SK-N-SH (cell line): ENCODE measurements at regions of chr20 and their contacts with region 1.

Region 1: DNA sequence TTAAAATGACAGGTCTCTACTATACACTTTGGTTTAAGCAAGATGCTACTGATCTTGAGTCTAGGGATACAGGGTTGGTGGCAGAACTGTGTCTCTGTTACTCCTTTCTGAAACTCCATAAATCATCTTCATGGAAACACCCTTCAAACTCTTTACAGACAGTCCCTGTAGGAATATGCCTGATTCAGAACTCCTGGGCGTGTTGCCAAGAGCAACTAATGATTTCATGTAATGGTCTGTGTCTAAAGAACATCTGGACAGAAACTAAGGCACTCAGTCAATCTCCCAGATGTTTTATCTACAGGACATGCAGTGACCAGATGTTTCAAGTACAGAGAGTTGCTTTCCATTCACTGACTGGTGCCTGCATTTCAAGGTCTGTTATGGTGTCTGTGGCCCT is 464.4 kb upstream of the CHD6 start:
- DNase-seq: peak; percentile 81
- H3K4me3 ChIP-seq: no peak overlapping the region
- H3K27ac ChIP-seq: peak overlapping the region in 1 of 2 experiments; percentile 97; a peak in 2 of 4 replicates
- H3K4me1 ChIP-seq: peaks cover 0 to 32% of the 10 kb centered on the region in 2 experiments; a peak in 2 of 4 replicates
- H3K27me3 ChIP-seq: no peaks in the 10 kb centered on the region
- CTCF ChIP-seq: no peak
- EP300 ChIP-seq: peak in 1 of 2 experiments; percentile 91; a peak in 2 of 4 replicates
- RAD21 ChIP-seq: peak; percentile 38

Region 2: GRCh38 chr20:42100137-42100704 is 17.6 kb after region 1 on chr20:
- CTCF ChIA-PET with region 1: interaction called, 3 read pairs
- POLR2A ChIA-PET with region 1: interaction called, 11 read pairs
- DNase-seq: peak; percentile 80
- H3K4me3 ChIP-seq: no peak overlapping the region
- H3K27ac ChIP-seq: peak overlapping the region; percentile 11 to 99; a peak in 3 of 4 replicates
- H3K4me1 ChIP-seq: peaks cover 0 to 49% of the 10 kb centered on the region in 2 experiments; a peak in 1 of 4 replicates
- H3K27me3 ChIP-seq: no peaks in the 10 kb centered on the region
- CTCF ChIP-seq: no peak
- EP300 ChIP-seq: peak in 1 of 2 experiments; percentile 89; a peak in 2 of 4 replicates
- RAD21 ChIP-seq: peak; percentile 25